ENCODE measurements at regions of chrX and their contacts with region 1.

Region 1: GRCh38 chrX:110146521-110146920 is 143.6 kb downstream of the TMEM164 start:
- DNase-seq: peak; percentile 36
- H3K4me3 ChIP-seq: no peak overlapping the region
- H3K27ac ChIP-seq: no peak overlapping the region
- H3K4me1 ChIP-seq: no peaks in the 10 kb centered on the region
- H3K27me3 ChIP-seq: no peaks in the 10 kb centered on the region
- CTCF ChIP-seq: peak; percentile 48
- POLR2A ChIP-seq: no peak

Region 2: GRCh38 chrX:109709129-109709631 is 437.3 kb before region 1 on chrX:
- CTCF ChIA-PET with region 1: interaction called, 14 read pairs
- POLR2A ChIA-PET with region 1: no interaction called
- dilution Hi-C with region 1: no loop called
- intact Hi-C with region 1: no loop called
- DNase-seq: peak; percentile 6
- H3K4me3 ChIP-seq: no peak overlapping the region
- H3K27ac ChIP-seq: peak overlapping the region; percentile 5
- H3K4me1 ChIP-seq: peaks cover 12% of the 10 kb centered on the region
- H3K27me3 ChIP-seq: no peaks in the 10 kb centered on the region
- CTCF ChIP-seq: no peak
- POLR2A ChIP-seq: no peak

Region 3: GRCh38 chrX:110002300-110003166 is 144.0 kb before region 1 on chrX and contains the start of gene TMEM164:
- CTCF ChIA-PET with region 1: interaction called, 17 read pairs
- POLR2A ChIA-PET with region 1: no interaction called
- dilution Hi-C with region 1: no loop called
- intact Hi-C with region 1: loop called (anchors 5 kb)
- DNase-seq: peak; percentile 70
- H3K4me3 ChIP-seq: peak within 1 kb of the TSS; percentile 55 to 70 (median 68)
- H3K27ac ChIP-seq: peak within 1 kb of the TSS; percentile 53
- H3K4me1 ChIP-seq: peaks cover 6% of the 10 kb centered on the region
- H3K27me3 ChIP-seq: no peaks in the 10 kb centered on the region
- CTCF ChIP-seq: no peak
- POLR2A ChIP-seq: peak; percentile 80
- total RNA-seq, gene TMEM164: 22.2 and 25.1 TPM in 2 replicates

Region 4: DNA sequence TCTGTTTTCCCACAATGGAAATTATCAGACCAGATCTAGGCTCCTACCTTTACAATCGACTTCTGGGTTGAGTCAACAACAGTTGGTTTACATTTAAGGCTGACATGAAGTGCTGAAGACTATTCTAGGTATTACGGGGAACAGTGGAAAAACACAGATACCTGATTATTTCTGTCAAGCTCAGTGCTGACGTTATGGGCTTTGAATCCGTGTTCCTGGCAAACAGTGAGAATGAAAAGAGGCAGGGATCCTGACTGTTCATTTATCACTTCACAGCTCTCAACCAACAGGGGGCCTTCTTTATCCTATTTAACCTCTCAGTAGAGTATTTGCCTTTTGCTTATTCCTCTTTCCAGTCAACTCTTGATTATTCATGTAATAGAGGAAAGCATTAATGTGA is 100.5 kb before region 1 on chrX:
- CTCF ChIA-PET with region 1: interaction called, 42 read pairs
- POLR2A ChIA-PET with region 1: no interaction called
- dilution Hi-C with region 1: no loop called
- intact Hi-C with region 1: no loop called
- DNase-seq: no peak
- H3K4me3 ChIP-seq: no peak overlapping the region
- H3K27ac ChIP-seq: no peak overlapping the region
- H3K4me1 ChIP-seq: no peaks in the 10 kb centered on the region
- H3K27me3 ChIP-seq: no peaks in the 10 kb centered on the region
- CTCF ChIP-seq: no peak
- POLR2A ChIP-seq: no peak

Region 5: DNA sequence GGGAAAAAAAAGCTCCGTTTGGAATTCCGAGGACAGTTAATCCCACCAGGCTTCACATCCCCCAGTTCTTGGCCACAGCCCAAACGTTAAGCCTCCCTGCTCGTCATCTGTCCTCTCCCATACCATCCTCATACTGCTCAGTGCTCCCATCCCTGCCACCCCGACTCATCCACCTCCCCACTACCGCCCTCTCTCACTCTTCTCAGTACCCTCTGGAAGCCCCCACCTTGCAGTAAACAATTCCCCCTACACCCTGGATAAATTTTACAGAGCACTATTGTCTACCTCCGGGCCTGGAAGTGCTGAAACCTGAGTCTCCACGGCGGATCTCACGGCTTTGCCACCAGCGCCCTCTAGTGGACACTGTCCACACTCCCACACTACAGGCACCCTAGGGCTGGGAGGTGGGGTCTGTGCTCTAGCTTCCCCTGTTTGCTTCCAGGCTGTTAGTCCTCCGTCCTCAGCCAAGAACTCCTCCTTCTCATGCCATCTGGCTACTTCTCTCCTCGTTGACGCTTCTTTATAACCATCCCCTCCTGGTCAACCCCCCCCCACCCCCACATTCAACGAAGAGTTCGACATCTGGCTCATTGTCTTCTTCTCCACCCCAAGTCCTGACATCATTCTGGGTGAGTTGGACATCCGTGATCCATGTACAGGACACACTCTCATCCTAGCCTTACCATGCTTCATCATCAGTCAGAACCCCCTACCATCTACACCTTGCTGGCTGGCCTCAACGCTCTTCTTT is 266.6 kb after region 1 on chrX:
- CTCF ChIA-PET with region 1: interaction called, 77 read pairs
- POLR2A ChIA-PET with region 1: no interaction called
- dilution Hi-C with region 1: loop called (anchors 10 kb)
- intact Hi-C with region 1: no loop called
- DNase-seq: peak; percentile 52
- H3K4me3 ChIP-seq: no peak overlapping the region
- H3K27ac ChIP-seq: no peak overlapping the region
- H3K4me1 ChIP-seq: peaks cover 7% of the 10 kb centered on the region
- H3K27me3 ChIP-seq: no peaks in the 10 kb centered on the region
- CTCF ChIP-seq: peak; percentile 67 to 78
- POLR2A ChIP-seq: no peak

Measured in endothelial cell of umbilical vein (primary cell).